IMR-90 (cell line): ENCODE measurements at regions of chr10 and their contacts with region 1.

Region 1: GRCh38 chr10:104642658-104643302 is 1.7 kb downstream of the SORCS3 start:
- DNase-seq: no peak
- ATAC-seq: no peak
- H3K4me3 ChIP-seq: no peak overlapping the region
- H3K27ac ChIP-seq: no peak overlapping the region
- H3K4me1 ChIP-seq: no peaks in the 10 kb centered on the region
- H3K27me3 ChIP-seq: peaks cover 33% of the 10 kb centered on the region
- CTCF ChIP-seq: no peak
- POLR2A ChIP-seq: no peak
- RAD21 ChIP-seq: no peak

Region 2: GRCh38 chr10:104678658-104679057 is 35.9 kb after region 1 on chr10:
- CTCF ChIA-PET with region 1: no interaction called
- POLR2A ChIA-PET with region 1: no interaction called
- dilution Hi-C with region 1: no loop called
- in situ Hi-C with region 1: no loop called
- intact Hi-C with region 1: loop called (anchors 1 kb)
- DNase-seq: no peak
- ATAC-seq: no peak
- H3K4me3 ChIP-seq: no peak overlapping the region
- H3K27ac ChIP-seq: no peak overlapping the region
- H3K4me1 ChIP-seq: no peaks in the 10 kb centered on the region
- H3K27me3 ChIP-seq: no peaks in the 10 kb centered on the region
- CTCF ChIP-seq: no peak
- POLR2A ChIP-seq: no peak
- RAD21 ChIP-seq: no peak